CD4-positive, alpha-beta T cell (primary cell): ENCODE measurements at regions of chr17 and their contacts with region 1.

Region 1: GRCh38 chr17:20234276-20234675 is 225.1 kb downstream of the SPECC1 start:
- DNase-seq: peak in 12 of 14 experiments; percentile 2 to 71 (median 38)
- ATAC-seq: peak; percentile 89
- H3K4me3 ChIP-seq: no peak overlapping the region
- H3K4me3 Mint-ChIP-seq: peak overlapping the region; percentile 36
- H3K27ac ChIP-seq: peak overlapping the region in 1 of 2 donors; percentile 49
- H3K27ac Mint-ChIP-seq: peak overlapping the region; percentile 67
- H3K4me1 ChIP-seq: peaks cover 21% of the 10 kb centered on the region
- H3K4me1 Mint-ChIP-seq: peaks cover 50% of the 10 kb centered on the region
- H3K27me3 ChIP-seq: no peaks in the 10 kb centered on the region
- H3K27me3 Mint-ChIP-seq: no peaks in the 10 kb centered on the region
- CTCF ChIP-seq: no peak

Region 2: DNA sequence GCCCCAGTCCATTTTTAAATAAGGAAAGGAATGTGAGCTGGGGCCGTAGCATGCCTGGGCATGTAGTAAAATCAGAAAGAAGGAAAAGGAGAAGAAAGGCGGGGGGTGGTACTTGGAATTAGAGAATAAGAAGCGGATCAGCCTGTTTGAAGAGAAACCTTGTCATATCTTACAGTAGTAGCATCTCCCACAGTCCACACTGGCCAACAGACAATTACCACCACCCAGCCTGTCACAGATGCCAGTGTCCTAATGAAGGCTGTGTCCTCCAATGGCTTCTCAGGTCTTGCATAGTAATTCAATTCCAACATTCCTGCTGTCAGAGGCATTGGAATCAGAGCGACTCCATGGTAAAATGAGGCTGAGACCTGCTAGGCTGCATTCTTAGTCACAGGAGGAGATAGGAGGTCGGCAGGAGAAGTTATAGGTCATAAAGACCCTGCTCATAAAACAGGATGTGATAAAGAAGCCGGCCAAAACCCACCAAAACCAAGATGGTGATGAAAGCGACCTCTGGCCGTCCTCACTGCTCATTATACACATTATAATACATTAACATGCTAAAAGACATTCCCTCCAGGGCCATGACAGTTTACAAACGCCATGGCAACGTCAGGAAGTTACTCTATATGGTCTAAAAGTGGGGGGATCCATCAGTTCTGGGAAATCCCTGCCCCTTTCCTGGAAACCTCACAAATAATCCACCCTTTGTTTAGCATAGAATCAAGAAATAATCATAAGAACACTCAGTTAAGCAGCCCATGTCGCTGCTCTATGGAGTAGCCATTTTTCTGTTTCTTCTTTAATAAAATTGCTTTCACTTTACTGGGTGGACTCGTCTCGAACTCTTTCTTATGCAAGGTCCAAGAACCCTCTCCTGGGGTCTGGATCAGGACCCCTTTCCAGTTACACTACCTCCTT is 247.1 kb before region 1 on chr17:
- CTCF ChIA-PET with region 1: no interaction called
- POLR2A ChIA-PET with region 1: no interaction called
- intact Hi-C with region 1: loop called (anchors 2 to 5 kb)
- DNase-seq: no peak
- ATAC-seq: no peak
- H3K4me3 ChIP-seq: no peak overlapping the region
- H3K4me3 Mint-ChIP-seq: no peak overlapping the region
- H3K27ac ChIP-seq: no peak overlapping the region
- H3K27ac Mint-ChIP-seq: no peak overlapping the region
- H3K4me1 ChIP-seq: no peaks in the 10 kb centered on the region
- H3K4me1 Mint-ChIP-seq: no peaks in the 10 kb centered on the region
- H3K27me3 ChIP-seq: no peaks in the 10 kb centered on the region
- H3K27me3 Mint-ChIP-seq: peaks cover 3% of the 10 kb centered on the region
- CTCF ChIP-seq: no peak

Region 3: DNA sequence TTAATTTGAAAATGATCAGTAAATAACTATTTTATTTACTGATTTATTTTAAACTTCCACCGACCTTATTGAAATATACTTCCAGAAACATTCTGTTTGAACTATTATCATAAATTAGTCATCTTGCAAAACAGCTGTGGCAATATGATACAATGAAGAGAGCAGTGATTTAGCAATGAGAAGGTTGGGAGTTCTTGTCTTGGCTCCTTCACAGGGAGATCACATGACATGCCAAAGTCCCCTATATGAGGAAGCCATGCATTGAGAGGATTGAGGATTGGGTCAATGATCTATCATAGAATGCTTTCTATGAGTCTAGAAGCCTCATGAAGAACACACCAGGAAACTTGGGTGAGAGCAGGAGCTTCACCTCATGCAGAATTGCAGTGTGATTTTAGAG is 10.4 kb after region 1 on chr17:
- CTCF ChIA-PET with region 1: no interaction called
- POLR2A ChIA-PET with region 1: interaction called, 13 read pairs
- intact Hi-C with region 1: no loop called
- DNase-seq: no peak
- ATAC-seq: no peak
- H3K4me3 ChIP-seq: no peak overlapping the region
- H3K4me3 Mint-ChIP-seq: no peak overlapping the region
- H3K27ac ChIP-seq: no peak overlapping the region
- H3K27ac Mint-ChIP-seq: no peak overlapping the region
- H3K4me1 ChIP-seq: peaks cover 9% of the 10 kb centered on the region
- H3K4me1 Mint-ChIP-seq: peaks cover 51% of the 10 kb centered on the region
- H3K27me3 ChIP-seq: no peaks in the 10 kb centered on the region
- H3K27me3 Mint-ChIP-seq: no peaks in the 10 kb centered on the region
- CTCF ChIP-seq: no peak

Region 4: DNA sequence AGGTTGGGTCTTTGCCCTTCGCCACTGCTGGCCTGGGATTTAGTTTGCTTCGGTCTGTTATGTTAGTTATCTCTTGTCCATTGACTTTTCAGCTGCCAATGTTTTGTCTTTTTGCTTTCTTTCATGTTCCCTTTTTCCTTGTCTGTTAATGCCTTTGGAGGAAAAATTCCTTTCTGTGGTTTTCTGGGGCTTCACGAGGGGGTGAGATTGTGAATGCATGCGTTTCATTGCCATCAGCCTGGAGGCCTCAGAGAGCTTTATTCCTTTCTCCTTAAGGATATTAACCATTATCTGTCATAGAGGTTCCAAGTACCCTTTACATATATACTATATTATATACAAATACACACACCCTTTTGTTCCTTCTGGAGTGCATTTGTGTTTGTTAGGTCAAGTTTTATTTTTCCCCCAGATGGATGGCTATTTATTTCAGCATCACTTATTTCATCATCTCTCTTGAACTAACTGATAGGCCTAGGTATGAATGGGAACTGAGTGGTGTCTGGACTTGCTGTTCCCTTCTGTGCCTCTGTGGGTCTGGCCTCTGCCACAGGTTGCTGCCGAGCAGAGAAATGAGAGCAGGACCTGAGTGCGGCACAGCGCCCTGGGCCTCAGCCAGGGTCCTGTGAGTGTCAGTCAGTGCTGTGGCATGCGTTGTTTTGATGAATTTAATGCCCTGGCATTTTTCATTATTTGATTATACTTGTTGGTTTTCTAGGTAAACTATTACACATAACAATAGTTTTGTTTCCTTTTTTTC is 39.6 kb after region 1 on chr17:
- CTCF ChIA-PET with region 1: no interaction called
- POLR2A ChIA-PET with region 1: interaction called, 6 read pairs
- intact Hi-C with region 1: loop called (anchors 5 kb)
- DNase-seq: no peak
- ATAC-seq: peak; percentile 19
- H3K4me3 ChIP-seq: no peak overlapping the region
- H3K4me3 Mint-ChIP-seq: peak overlapping the region; percentile 77
- H3K27ac ChIP-seq: peak overlapping the region in 1 of 2 donors; percentile 27
- H3K27ac Mint-ChIP-seq: peak overlapping the region; percentile 80
- H3K4me1 ChIP-seq: peaks cover 70% of the 10 kb centered on the region
- H3K4me1 Mint-ChIP-seq: peaks cover 99% of the 10 kb centered on the region
- H3K27me3 ChIP-seq: no peaks in the 10 kb centered on the region
- H3K27me3 Mint-ChIP-seq: no peaks in the 10 kb centered on the region
- CTCF ChIP-seq: no peak